HepG2 (cell line): ENCODE measurements at regions of chr5 and their contacts with region 1.

Region 1: GRCh38 chr5:154038707-154039457 is at the starts of genes FAM114A2 and MFAP3:
- DNase-seq: peak; percentile 88
- ATAC-seq: peak; percentile 100
- H3K4me3 ChIP-seq: peak within 1 kb of the TSS; percentile 80 to 96 (median 85)
- H3K27ac ChIP-seq: peak within 1 kb of the TSS; percentile 82
- H3K4me1 ChIP-seq: peaks cover 31% of the 10 kb centered on the region
- H3K27me3 ChIP-seq: no peaks in the 10 kb centered on the region; a peak in 1 of 5 replicates
- CTCF ChIP-seq: peak; percentile 32; the same call in 1 of the 2 replicates
- EP300 ChIP-seq: 0 out of 4 replicates have a peak, but pooled peaks of 1 of the 2 experiments have one; percentile 11
- POLR2A ChIP-seq: peak; percentile 85 to 92
- RAD21 ChIP-seq: no peak
- total RNA-seq, gene FAM114A2: 11.4 and 17.4 TPM in 2 replicates
- total RNA-seq, gene MFAP3: 23.7 and 28.3 TPM in 2 replicates

Region 2: GRCh38 chr5:154049636-154050035 is 10.8 kb after region 1 on chr5:
- CTCF ChIA-PET with region 1: interaction called, 3 read pairs
- POLR2A ChIA-PET with region 1: interaction called, 11 read pairs
- in situ Hi-C with region 1: no loop called
- intact Hi-C with region 1: no loop called
- DNase-seq: no peak
- ATAC-seq: no peak
- H3K4me3 ChIP-seq: no peak overlapping the region
- H3K27ac ChIP-seq: no peak overlapping the region
- H3K4me1 ChIP-seq: no peaks in the 10 kb centered on the region
- H3K27me3 ChIP-seq: no peaks in the 10 kb centered on the region
- CTCF ChIP-seq: no peak
- EP300 ChIP-seq: no peak
- POLR2A ChIP-seq: no peak
- RAD21 ChIP-seq: no peak